Activated T-helper 2 cell treated with anti-CD3 and anti-CD28 coated beads, Interferon-gamma antibody, Interleukin-2, Interleukin-4, amounts not matched to agents 10 μg/mL and 5 μg/mL and 100 μg/mL, durations not matched to agents 14 hours and 24 hours and 36 hours (primary cell): ENCODE measurements at regions of chr2 and their contacts with region 1.

Region 1: GRCh38 chr2:96470636-96471035 is 34.5 kb downstream of the NEURL3 start:
- DNase-seq: peak; percentile 24
- H3K4me3 Mint-ChIP-seq: no peak overlapping the region
- H3K27ac Mint-ChIP-seq: no peak overlapping the region
- H3K4me1 Mint-ChIP-seq: peaks cover 11% of the 10 kb centered on the region
- H3K27me3 Mint-ChIP-seq: peaks cover 3% of the 10 kb centered on the region

Region 2: GRCh38 chr2:96554293-96555145 is 83.9 kb after region 1 on chr2:
- intact Hi-C with region 1: loop called (anchors 10 kb)
- DNase-seq: peak; percentile 58
- H3K4me3 Mint-ChIP-seq: no peak overlapping the region
- H3K27ac Mint-ChIP-seq: no peak overlapping the region
- H3K4me1 Mint-ChIP-seq: peaks cover 19% of the 10 kb centered on the region
- H3K27me3 Mint-ChIP-seq: no peaks in the 10 kb centered on the region